ENCODE measurements at regions of chr20 and their contacts with region 1.

Region 1: DNA sequence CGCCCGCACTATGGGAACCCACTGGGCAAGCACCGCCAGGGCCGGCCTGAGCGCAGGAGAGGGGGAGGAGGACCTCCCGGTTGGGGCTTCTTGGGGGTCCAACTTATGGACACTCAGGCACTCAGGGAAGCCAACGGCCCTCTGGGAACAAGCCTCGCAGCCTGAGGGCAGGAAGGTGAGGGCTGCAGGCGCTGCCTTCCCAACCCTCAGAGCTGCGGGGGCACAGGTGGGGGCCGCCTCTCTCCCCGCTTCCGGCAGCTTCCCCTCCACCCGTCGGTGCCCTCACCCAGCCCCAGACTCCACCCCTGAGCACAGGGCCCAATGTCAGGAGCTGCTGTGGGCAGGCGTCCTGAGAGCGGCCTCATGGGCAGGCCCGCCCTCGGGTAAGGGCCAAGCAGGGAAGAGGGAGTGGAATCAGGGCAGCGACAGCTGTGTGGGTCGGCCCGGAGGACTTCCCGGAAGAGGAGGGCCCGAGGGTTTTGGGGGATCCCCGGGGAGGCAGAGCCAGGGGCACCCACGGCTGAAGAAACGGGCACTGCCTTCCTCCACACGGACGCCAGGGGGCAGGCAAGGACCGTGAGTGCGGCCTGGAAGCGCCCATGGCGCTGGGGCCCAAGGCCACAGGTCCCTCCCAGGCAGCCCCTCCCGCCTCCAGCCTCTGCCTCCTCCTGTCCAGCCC is 488 bp upstream of the PTK6 start:
- DNase-seq: peak; percentile 98 to 100
- ATAC-seq: peak; percentile 86 to 95
- H3K4me3 ChIP-seq: peak overlapping the region; percentile 59
- H3K27ac ChIP-seq: peak overlapping the region; percentile 93 to 97
- H3K4me1 ChIP-seq: peaks cover 18% of the 10 kb centered on the region
- CTCF ChIP-seq: peak; percentile 94
- EP300 ChIP-seq: no peak
- POLR2A ChIP-seq: peak; percentile 50
- RAD21 ChIP-seq: peak; percentile 94 to 99

Region 2: GRCh38 chr20:63129991-63130657 is 407.5 kb before region 1 on chr20:
- CTCF ChIA-PET with region 1: no interaction called
- POLR2A ChIA-PET with region 1: no interaction called
- DNase-seq: no peak
- ATAC-seq: peak in 1 of 2 experiments; percentile 17; a peak in 1 of 6 replicates
- H3K4me3 ChIP-seq: no peak overlapping the region
- H3K27ac ChIP-seq: no peak overlapping the region
- H3K4me1 ChIP-seq: 0 out of 3 replicates have a peak, but pooled peaks cover 7% of the 10 kb centered on the region
- CTCF ChIP-seq: no peak
- EP300 ChIP-seq: no peak
- POLR2A ChIP-seq: no peak
- RAD21 ChIP-seq: no peak

Region 3: GRCh38 chr20:63394069-63394919 is 143.4 kb before region 1 on chr20:
- CTCF ChIA-PET with region 1: no interaction called
- POLR2A ChIA-PET with region 1: no interaction called
- DNase-seq: no peak
- ATAC-seq: no peak
- H3K4me3 ChIP-seq: no peak overlapping the region
- H3K27ac ChIP-seq: no peak overlapping the region
- H3K4me1 ChIP-seq: no peaks in the 10 kb centered on the region
- CTCF ChIP-seq: no peak
- EP300 ChIP-seq: no peak
- POLR2A ChIP-seq: no peak
- RAD21 ChIP-seq: no peak

Region 4: GRCh38 chr20:63520504-63520933 is 17.1 kb before region 1 on chr20 and contains the start of gene PPDPF:
- CTCF ChIA-PET with region 1: interaction called, 35 read pairs
- POLR2A ChIA-PET with region 1: interaction called, 62 read pairs
- DNase-seq: peak; percentile 81 to 82
- ATAC-seq: peak; percentile 75 to 79
- H3K4me3 ChIP-seq: peak within 1 kb of the TSS; percentile 83
- H3K27ac ChIP-seq: peak within 1 kb of the TSS; percentile 88 to 95
- H3K4me1 ChIP-seq: peaks cover 10% of the 10 kb centered on the region; the same call in 2 of the 3 replicates
- CTCF ChIP-seq: no peak
- EP300 ChIP-seq: no peak
- POLR2A ChIP-seq: peak; percentile 87
- RAD21 ChIP-seq: no peak
- polyA plus RNA-seq, gene PPDPF: 4.6 and 7.7 TPM in 2 replicates

Region 5: DNA sequence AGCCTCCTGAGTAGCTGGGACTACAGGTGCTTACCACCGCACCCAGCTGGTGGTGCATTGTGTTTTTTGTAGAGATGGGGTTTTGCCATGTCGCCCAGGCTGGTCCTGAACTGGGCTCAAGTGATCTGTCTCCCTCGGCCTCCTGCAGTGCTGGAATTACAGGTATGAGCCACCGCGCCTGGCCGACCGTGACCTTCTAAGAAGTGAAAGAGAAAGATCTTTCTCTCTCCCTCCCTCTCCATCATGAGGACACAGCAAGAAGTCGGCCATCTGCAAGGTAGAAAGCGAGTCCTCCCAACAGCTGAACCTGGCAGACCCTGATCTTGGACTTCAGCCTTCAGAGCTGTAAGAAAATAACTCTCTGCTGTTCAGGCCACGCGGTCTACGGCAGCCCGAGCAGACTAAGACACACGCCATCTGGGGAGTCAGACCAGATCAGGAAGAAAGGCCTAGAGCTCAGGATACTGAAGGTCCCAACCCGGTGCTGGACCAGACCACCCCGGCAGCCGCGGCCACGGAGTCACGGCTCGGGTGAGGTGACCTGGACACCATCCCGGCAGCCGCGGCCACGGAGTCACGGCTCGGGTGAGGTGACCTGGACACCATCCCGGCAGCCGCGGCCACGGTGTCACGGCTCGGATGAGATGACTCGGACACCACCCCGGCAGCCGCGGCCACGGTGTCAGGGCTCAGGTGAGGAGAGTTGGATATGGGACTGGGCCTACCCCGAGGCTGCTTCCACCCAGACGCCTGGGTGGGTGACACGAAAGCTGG is 79.6 kb after region 1 on chr20:
- CTCF ChIA-PET with region 1: interaction called, 23 read pairs
- POLR2A ChIA-PET with region 1: no interaction called
- DNase-seq: no peak
- ATAC-seq: 0 out of 6 replicates have a peak, but pooled peaks of 1 of the 2 experiments have one; percentile 31
- H3K4me3 ChIP-seq: no peak overlapping the region
- H3K27ac ChIP-seq: no peak overlapping the region
- H3K4me1 ChIP-seq: no peaks in the 10 kb centered on the region
- CTCF ChIP-seq: no peak
- EP300 ChIP-seq: no peak
- POLR2A ChIP-seq: no peak
- RAD21 ChIP-seq: no peak

Region 6: DNA sequence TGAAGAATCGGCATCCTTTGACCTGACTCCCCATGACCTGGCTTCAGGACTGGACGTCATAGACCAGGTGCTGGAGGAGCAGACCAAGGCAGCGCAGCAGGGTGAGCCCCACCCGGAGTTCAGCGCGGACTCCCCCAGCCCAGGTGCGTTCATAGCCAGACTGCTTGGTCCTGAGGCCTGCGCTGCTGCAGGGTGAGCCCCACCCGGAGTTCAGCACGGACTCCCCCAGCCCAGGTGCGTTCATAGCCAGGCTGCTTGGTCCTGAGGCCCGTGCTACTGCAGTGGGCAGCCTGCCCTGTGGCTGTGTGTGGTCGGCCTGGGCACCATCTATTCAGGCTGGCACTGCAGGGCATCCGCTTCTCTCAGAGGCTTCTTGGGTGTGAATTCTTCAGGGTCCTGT is 136.3 kb after region 1 on chr20:
- CTCF ChIA-PET with region 1: interaction called, 11 read pairs
- POLR2A ChIA-PET with region 1: no interaction called
- DNase-seq: no peak
- ATAC-seq: no peak
- H3K4me3 ChIP-seq: no peak overlapping the region
- H3K27ac ChIP-seq: no peak overlapping the region
- H3K4me1 ChIP-seq: no peaks in the 10 kb centered on the region
- CTCF ChIP-seq: no peak
- EP300 ChIP-seq: no peak
- POLR2A ChIP-seq: no peak
- RAD21 ChIP-seq: no peak

Region 7: DNA sequence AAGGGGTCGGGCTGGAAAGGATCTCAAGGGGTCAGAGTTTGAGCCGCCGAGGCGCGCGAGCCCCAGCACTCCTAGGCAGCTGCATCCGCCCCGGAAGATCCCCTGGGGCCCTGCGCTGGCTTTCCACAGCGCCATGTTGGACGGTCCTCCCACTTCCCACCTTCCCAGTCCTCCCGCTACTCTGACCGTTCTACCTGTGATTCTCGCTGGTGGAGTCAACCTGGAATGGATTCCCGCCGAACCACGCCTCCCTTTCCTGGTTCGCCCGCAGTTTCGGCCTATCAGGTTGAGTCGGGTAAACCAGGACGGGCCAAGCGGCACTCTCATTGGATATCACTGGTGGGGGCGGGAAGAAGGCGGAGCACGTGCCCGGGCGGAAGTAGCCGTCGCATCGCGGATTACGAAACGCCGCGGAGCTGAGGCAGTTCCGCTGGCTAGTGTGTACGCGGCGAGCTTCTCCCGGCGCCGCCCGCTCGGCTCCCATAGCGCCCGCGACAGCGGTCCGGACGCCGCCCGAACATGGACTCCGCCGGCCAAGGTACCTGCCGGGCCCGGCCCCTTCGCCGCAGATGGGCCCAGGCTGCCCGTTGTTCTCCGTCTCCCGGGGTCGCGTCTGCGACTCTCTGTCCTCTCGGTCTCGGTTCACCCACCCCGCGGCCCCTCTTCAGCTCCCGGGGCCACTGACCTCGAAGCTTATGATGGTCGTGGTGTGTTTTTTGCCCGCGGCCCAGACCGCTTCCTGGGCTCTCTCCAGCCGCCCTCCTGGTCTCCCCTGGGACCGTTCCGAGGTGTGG is 327.4 kb after region 1 on chr20 and contains the start of gene TPD52L2:
- CTCF ChIA-PET with region 1: interaction called, 18 read pairs
- POLR2A ChIA-PET with region 1: interaction called, 7 read pairs
- DNase-seq: peak; percentile 98 to 99
- ATAC-seq: peak; percentile 90 to 94
- H3K4me3 ChIP-seq: peak within 1 kb of the TSS; percentile 95
- H3K27ac ChIP-seq: peak within 1 kb of the TSS; percentile 94 to 95
- H3K4me1 ChIP-seq: peaks cover 14% of the 10 kb centered on the region; the same call in 2 of the 3 replicates
- CTCF ChIP-seq: no peak
- EP300 ChIP-seq: no peak
- POLR2A ChIP-seq: peak; percentile 68
- RAD21 ChIP-seq: no peak
- polyA plus RNA-seq, gene TPD52L2: 86.3 and 93.9 TPM in 2 replicates

Region 8: DNA sequence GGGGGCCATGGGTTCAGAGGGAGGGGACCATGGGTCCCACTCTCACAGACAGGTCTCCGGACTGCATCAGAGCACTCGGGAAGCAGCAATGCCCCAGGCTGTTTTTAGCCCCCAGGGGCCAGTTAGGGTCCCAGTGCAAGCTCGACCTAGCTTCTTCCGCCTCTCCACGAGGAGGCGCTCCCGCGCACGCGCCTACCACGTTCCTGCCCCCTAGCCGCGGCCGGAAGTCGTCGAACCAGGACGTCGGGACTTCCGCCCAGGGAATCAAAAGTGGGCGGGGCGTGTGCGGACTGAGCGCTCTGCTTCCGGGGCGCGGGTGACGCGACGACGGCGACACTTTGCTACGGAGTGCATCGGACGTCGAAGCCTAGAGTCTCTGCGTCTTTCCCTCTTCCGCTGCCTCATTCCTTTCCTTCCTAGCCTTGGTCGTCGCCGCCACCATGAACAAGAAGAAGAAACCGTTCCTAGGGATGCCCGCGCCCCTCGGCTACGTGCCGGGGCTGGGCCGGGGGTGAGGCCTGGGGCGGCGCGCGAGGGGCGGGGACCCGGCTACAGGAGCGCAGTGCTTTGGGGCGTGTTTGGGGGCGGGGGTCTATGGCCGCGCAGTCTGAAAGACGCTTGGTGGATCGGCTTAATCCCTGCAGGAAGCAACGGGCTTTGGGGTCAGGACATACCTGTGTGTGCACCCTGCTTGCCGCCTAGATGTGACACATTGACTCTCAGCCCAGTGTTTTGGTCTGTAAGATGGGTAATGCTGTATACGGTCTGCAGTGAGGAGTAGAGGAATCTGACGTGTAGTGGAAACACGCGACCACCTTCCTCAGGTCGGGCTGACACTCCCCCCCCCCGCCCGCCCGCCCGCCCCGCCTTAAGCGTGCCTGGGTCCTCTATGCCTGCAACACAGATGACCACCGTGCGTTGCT is 443.4 kb after region 1 on chr20 and contains the start of gene PRPF6:
- CTCF ChIA-PET with region 1: interaction called, 15 read pairs
- POLR2A ChIA-PET with region 1: interaction called, 14 read pairs
- DNase-seq: peak; percentile 92 to 97
- ATAC-seq: peak; percentile 84 to 87
- H3K4me3 ChIP-seq: peak within 1 kb of the TSS; percentile 93
- H3K27ac ChIP-seq: peak within 1 kb of the TSS; percentile 94 to 95
- H3K4me1 ChIP-seq: peaks cover 34% of the 10 kb centered on the region
- CTCF ChIP-seq: peak; percentile 86
- EP300 ChIP-seq: no peak
- POLR2A ChIP-seq: peak; percentile 68
- RAD21 ChIP-seq: peak; percentile 30 to 51; a peak in 4 of 5 replicates
- polyA plus RNA-seq, gene PRPF6: 42.8 and 47.5 TPM in 2 replicates